ENCODE measurements at regions of chr11 and their contacts with region 1.

Region 1: GRCh38 chr11:107858217-107859070 is at the start of gene SLC35F2:
- DNase-seq: peak in 1 of 2 donors; percentile 74
- H3K4me3 ChIP-seq: peak within 1 kb of the TSS; percentile 65 to 84
- H3K27ac ChIP-seq: peak within 1 kb of the TSS; percentile 66 to 88
- H3K4me1 ChIP-seq: no peaks in the 10 kb centered on the region
- H3K27me3 ChIP-seq: no peaks in the 10 kb centered on the region
- CTCF ChIP-seq: no peak
- total RNA-seq, gene SLC35F2: 5.4 TPM

Region 2: DNA sequence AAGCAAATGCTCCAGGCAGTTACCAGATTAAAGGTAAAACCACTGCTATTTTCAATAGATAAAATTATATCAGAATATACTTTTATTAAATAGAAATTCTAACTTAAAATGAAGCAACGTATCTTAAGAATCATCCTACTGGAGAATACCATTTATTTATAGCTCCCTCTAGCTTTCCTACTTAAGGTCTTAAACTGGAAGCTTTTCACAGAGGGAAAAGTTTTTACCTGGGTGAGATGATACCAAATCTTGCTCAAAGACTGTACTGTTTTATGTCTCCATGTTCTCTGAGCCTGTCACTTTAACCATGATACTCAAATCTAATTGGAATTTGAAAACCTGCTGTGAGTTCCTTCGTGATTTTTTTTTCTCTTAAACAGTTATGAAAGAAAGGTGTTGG is 1489.2 kb before region 1 on chr11:
- intact Hi-C with region 1: no loop called
- DNase-seq: no peak
- H3K4me3 ChIP-seq: no peak overlapping the region
- H3K27ac ChIP-seq: no peak overlapping the region
- H3K4me1 ChIP-seq: no peaks in the 10 kb centered on the region
- H3K27me3 ChIP-seq: no peaks in the 10 kb centered on the region
- CTCF ChIP-seq: no peak

Region 3: GRCh38 chr11:107799218-107799859 is 59.1 kb before region 1 on chr11:
- intact Hi-C with region 1: loop called (anchors 5 kb)
- DNase-seq: peak; percentile 30 to 91
- H3K4me3 ChIP-seq: no peak overlapping the region
- H3K27ac ChIP-seq: peak overlapping the region; percentile 67 to 86
- H3K4me1 ChIP-seq: peaks cover 4 to 10% of the 10 kb centered on the region in 2 donors
- H3K27me3 ChIP-seq: no peaks in the 10 kb centered on the region
- CTCF ChIP-seq: peak; percentile 59 to 95 (median 94)

Region 4: DNA sequence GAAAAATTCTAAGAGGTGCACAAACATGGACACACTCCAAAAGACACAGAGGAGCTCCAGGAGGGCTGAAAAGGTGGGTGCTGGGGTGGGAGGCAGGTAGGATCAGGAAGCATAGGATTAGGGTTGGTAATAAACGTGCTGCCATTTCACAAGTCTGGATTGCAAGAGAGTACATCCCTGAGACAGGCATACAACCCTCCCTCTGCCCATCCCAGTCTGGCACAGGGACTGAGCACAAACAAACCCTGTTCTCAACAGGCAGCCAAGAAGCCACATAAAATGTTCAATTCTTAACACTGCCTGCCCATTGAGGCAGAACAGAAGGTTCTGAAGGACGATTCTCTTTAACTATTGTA is 18.3 kb before region 1 on chr11:
- intact Hi-C with region 1: loop called (anchors 2 kb)
- DNase-seq: no peak
- H3K4me3 ChIP-seq: peak overlapping the region in 1 of 2 donors; percentile 55
- H3K27ac ChIP-seq: peak overlapping the region; percentile 93
- H3K4me1 ChIP-seq: peaks cover 6 to 15% of the 10 kb centered on the region in 2 donors
- H3K27me3 ChIP-seq: no peaks in the 10 kb centered on the region
- CTCF ChIP-seq: no peak

Region 5: DNA sequence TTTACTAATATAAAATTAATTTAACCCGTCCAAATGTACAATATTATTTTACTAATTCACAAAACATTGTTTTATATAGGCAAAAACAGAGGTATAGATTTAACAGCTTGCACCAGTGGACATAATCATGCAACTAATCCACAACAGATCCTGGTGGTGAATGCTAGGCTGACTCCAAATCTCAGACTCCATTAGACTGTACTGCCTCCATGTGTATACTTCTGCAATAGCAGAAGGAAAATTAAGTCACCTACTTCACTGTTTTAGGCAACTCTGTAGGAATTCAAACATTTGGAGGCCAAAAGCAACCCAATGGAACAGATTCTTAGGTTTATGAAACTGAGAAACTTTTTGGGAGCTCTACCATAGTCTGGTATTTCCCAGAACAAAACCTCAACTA is 39.8 kb after region 1 on chr11:
- intact Hi-C with region 1: no loop called
- DNase-seq: no peak
- H3K4me3 ChIP-seq: no peak overlapping the region
- H3K27ac ChIP-seq: no peak overlapping the region
- H3K4me1 ChIP-seq: no peaks in the 10 kb centered on the region
- H3K27me3 ChIP-seq: no peaks in the 10 kb centered on the region
- CTCF ChIP-seq: peak; percentile 48 to 62 (median 58)

Region 6: GRCh38 chr11:107916671-107917241 is 58.3 kb after region 1 on chr11:
- intact Hi-C with region 1: no loop called
- DNase-seq: no peak
- H3K4me3 ChIP-seq: no peak overlapping the region
- H3K27ac ChIP-seq: no peak overlapping the region
- H3K4me1 ChIP-seq: no peaks in the 10 kb centered on the region
- H3K27me3 ChIP-seq: no peaks in the 10 kb centered on the region
- CTCF ChIP-seq: peak in 2 of 3 experiments; percentile 20 to 24

Region 7: GRCh38 chr11:108685419-108686130 is 827.1 kb after region 1 on chr11:
- intact Hi-C with region 1: no loop called
- DNase-seq: no peak
- H3K4me3 ChIP-seq: no peak overlapping the region
- H3K27ac ChIP-seq: no peak overlapping the region
- H3K4me1 ChIP-seq: no peaks in the 10 kb centered on the region
- H3K27me3 ChIP-seq: no peaks in the 10 kb centered on the region
- CTCF ChIP-seq: no peak

Measured in ascending aorta (tissue), 2 donors.